Caco-2 (cell line): ENCODE measurements at regions of chr9 and their contacts with region 1.

Region 1: DNA sequence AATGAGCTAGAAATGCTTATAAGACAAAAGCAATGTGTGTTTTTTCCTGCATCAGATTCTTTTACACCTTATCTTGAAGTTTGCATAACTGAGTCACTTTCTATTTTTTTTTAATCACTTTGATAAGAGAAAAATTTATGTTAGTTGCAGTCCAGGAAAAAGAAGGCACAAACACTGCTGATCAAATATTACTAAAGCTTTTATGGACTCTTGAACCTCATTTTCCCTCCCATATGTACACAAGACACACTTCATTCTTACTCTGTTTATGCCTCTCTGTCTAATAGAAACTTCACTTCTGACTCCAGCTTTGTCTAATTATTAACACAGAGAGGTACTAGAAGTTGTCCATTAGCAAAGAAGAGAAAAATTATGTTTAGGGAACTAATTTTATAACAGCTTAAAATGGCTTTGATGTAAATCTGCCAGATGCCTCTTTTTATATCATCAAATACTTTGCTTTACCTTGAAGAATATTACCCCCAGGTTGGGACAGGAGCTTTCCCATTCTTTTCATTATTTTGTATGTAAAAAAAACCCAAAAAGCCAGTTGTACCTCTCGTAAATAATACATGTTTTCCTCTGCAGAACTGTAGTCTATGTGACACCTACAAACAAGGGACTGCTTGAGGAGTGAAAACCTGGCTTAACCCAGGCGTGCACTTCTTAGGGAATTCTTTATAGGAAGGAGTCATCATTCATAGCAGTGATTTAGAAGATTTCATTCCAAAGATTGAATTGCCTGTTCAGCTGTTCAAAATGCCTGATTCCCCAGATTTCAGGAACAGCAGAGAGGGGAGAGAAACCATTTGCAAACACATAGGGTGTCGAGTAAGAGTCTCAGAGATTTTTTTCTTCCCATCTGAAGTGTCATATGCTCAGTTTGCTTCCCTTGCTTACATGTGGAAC is 72.6 kb downstream of the DAPK1 start:
- DNase-seq: peak in 1 of 2 experiments; percentile 40
- H3K4me3 ChIP-seq: 0 out of 2 replicates have a peak overlapping the region, but pooled peaks have one; percentile 9
- H3K4me3 Mint-ChIP-seq: peak overlapping the region; percentile 48
- H3K27ac Mint-ChIP-seq: peak overlapping the region; percentile 72
- H3K4me1 ChIP-seq: peaks cover 34% of the 10 kb centered on the region
- H3K4me1 Mint-ChIP-seq: peaks cover 7% of the 10 kb centered on the region
- H3K27me3 ChIP-seq: no peaks in the 10 kb centered on the region
- H3K27me3 Mint-ChIP-seq: no peaks in the 10 kb centered on the region
- CTCF ChIP-seq: no peak

Region 2: DNA sequence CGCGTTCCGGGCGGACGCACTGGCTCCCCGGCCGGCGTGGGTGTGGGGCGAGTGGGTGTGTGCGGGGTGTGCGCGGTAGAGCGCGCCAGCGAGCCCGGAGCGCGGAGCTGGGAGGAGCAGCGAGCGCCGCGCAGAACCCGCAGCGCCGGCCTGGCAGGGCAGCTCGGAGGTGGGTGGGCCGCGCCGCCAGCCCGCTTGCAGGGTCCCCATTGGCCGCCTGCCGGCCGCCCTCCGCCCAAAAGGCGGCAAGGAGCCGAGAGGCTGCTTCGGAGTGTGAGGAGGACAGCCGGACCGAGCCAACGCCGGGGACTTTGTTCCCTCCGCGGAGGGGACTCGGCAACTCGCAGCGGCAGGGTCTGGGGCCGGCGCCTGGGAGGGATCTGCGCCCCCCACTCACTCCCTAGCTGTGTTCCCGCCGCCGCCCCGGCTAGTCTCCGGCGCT is 72.6 kb before region 1 on chr9 and contains the start of gene DAPK1:
- CTCF ChIA-PET with region 1: no interaction called
- POLR2A ChIA-PET with region 1: no interaction called
- intact Hi-C with region 1: loop called (anchors 5 kb)
- DNase-seq: peak; percentile 68 to 73
- H3K4me3 ChIP-seq: peak within 1 kb of the TSS; percentile 70
- H3K4me3 Mint-ChIP-seq: peak within 1 kb of the TSS; percentile 78
- H3K27ac Mint-ChIP-seq: peak within 1 kb of the TSS; percentile 73
- H3K4me1 ChIP-seq: peaks cover 6% of the 10 kb centered on the region; the same call in 1 of the 2 replicates
- H3K4me1 Mint-ChIP-seq: peaks cover 11% of the 10 kb centered on the region
- H3K27me3 ChIP-seq: no peaks in the 10 kb centered on the region
- H3K27me3 Mint-ChIP-seq: no peaks in the 10 kb centered on the region
- CTCF ChIP-seq: peak; percentile 13 to 18
- total RNA-seq, gene DAPK1: 65.8 and 79.2 TPM in 2 replicates

Region 3: GRCh38 chr9:87599901-87600610 is 29.8 kb after region 1 on chr9:
- CTCF ChIA-PET with region 1: no interaction called
- POLR2A ChIA-PET with region 1: no interaction called
- intact Hi-C with region 1: no loop called
- DNase-seq: peak in 1 of 2 experiments; percentile 7
- H3K4me3 ChIP-seq: no peak overlapping the region
- H3K4me3 Mint-ChIP-seq: no peak overlapping the region
- H3K27ac Mint-ChIP-seq: peak overlapping the region; percentile 39
- H3K4me1 ChIP-seq: peaks cover 11% of the 10 kb centered on the region; the same call in 1 of the 2 replicates
- H3K4me1 Mint-ChIP-seq: peaks cover 11% of the 10 kb centered on the region
- H3K27me3 ChIP-seq: no peaks in the 10 kb centered on the region
- H3K27me3 Mint-ChIP-seq: no peaks in the 10 kb centered on the region
- CTCF ChIP-seq: no peak

Region 4: GRCh38 chr9:87613265-87614111 is 43.2 kb after region 1 on chr9:
- CTCF ChIA-PET with region 1: no interaction called
- POLR2A ChIA-PET with region 1: no interaction called
- intact Hi-C with region 1: loop called (anchors 1 kb)
- DNase-seq: peak in 1 of 2 experiments; percentile 22
- H3K4me3 ChIP-seq: no peak overlapping the region
- H3K4me3 Mint-ChIP-seq: no peak overlapping the region
- H3K27ac Mint-ChIP-seq: peak overlapping the region; percentile 10
- H3K4me1 ChIP-seq: peaks cover 13% of the 10 kb centered on the region; the same call in 1 of the 2 replicates
- H3K4me1 Mint-ChIP-seq: peaks cover 7% of the 10 kb centered on the region
- H3K27me3 ChIP-seq: no peaks in the 10 kb centered on the region
- H3K27me3 Mint-ChIP-seq: no peaks in the 10 kb centered on the region
- CTCF ChIP-seq: no peak

Region 5: GRCh38 chr9:87662808-87663528 is 92.7 kb after region 1 on chr9:
- CTCF ChIA-PET with region 1: no interaction called
- POLR2A ChIA-PET with region 1: no interaction called
- intact Hi-C with region 1: loop called (anchors 10 kb)
- DNase-seq: peak; percentile 52 to 68
- H3K4me3 ChIP-seq: no peak overlapping the region
- H3K4me3 Mint-ChIP-seq: no peak overlapping the region
- H3K27ac Mint-ChIP-seq: no peak overlapping the region
- H3K4me1 ChIP-seq: no peaks in the 10 kb centered on the region
- H3K4me1 Mint-ChIP-seq: peaks cover 9% of the 10 kb centered on the region
- H3K27me3 ChIP-seq: no peaks in the 10 kb centered on the region
- H3K27me3 Mint-ChIP-seq: no peaks in the 10 kb centered on the region
- CTCF ChIP-seq: peak; percentile 50 to 51